ENCODE measurements at regions of chr7 and their contacts with region 1.

Region 1: DNA sequence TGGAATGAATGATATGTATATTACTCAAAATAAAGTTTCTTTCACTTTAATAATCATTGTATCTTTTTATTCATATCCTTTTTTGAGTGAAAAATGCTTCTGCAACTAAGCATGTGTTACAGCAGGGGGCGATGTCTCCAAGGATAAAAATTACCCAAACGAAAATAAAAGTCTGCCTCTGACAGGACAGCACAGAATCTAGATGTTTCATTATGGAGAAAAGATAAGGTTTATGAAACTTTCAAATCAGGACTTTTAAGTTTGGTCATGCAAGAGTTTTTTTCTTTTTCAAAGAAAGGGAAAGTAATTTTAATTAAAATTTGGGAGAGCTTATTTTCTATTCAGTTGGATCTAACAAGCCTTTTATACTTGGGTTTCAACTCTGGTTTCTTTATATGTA is 48.4 kb downstream of the TES start:
- DNase-seq: peak; percentile 52 to 80 (median 73)
- H3K4me3 ChIP-seq: no peak overlapping the region
- H3K27ac ChIP-seq: no peak overlapping the region
- H3K4me1 ChIP-seq: no peaks in the 10 kb centered on the region
- H3K27me3 ChIP-seq: no peaks in the 10 kb centered on the region

Region 2: DNA sequence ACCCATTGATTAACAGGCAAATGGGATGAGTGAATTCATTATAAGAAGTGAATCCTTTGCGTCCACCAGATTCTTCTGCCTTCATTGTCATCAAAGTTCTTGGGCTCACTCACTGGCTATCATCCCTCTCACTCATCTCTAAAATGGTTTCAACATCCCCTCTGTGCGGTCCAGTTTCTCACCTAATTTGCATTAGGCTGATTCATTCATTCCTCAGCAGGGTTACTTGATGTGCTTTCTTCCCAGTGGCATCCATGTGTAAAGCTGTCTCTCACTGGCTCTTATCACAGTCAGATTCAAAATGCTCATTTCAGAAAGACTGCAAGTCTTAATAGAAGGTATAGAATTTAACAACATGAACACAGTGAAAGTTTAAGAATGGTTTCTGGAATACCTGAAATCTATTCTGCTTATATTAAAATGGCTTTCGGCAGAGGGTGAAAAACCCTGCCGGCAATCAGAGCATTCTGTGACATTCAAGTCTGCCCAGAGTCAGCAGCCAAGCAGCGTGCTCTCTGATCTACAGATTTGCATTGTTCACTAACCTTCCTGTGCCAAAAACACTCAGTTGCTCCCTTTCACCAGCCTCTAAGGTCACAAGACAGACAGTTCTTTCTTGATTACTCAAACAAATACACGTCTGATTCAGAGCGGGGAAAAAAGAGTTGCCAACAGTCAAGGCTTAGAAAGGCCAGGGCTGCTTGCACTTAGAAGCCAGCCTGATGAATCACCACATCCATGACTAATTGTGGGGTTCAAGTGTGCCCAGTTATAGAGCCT is 58.3 kb after region 1 on chr7:
- CTCF ChIA-PET with region 1: no interaction called
- POLR2A ChIA-PET with region 1: no interaction called
- DNase-seq: no peak
- H3K4me3 ChIP-seq: no peak overlapping the region
- H3K27ac ChIP-seq: no peak overlapping the region
- H3K4me1 ChIP-seq: no peaks in the 10 kb centered on the region
- H3K27me3 ChIP-seq: no peaks in the 10 kb centered on the region

Region 3: GRCh38 chr7:116525913-116526861 is 267.5 kb after region 1 on chr7:
- CTCF ChIA-PET with region 1: interaction called, 30 read pairs
- POLR2A ChIA-PET with region 1: no interaction called
- DNase-seq: peak; percentile 70 to 82 (median 76)
- H3K4me3 ChIP-seq: peak overlapping the region; percentile 17 to 83 (median 54)
- H3K27ac ChIP-seq: no peak overlapping the region
- H3K4me1 ChIP-seq: peaks cover 0 to 28% (median 22%) of the 10 kb centered on the region in 4 experiments
- H3K27me3 ChIP-seq: peaks cover 10 to 57% (median 37%) of the 10 kb centered on the region in 5 experiments

Region 4: DNA sequence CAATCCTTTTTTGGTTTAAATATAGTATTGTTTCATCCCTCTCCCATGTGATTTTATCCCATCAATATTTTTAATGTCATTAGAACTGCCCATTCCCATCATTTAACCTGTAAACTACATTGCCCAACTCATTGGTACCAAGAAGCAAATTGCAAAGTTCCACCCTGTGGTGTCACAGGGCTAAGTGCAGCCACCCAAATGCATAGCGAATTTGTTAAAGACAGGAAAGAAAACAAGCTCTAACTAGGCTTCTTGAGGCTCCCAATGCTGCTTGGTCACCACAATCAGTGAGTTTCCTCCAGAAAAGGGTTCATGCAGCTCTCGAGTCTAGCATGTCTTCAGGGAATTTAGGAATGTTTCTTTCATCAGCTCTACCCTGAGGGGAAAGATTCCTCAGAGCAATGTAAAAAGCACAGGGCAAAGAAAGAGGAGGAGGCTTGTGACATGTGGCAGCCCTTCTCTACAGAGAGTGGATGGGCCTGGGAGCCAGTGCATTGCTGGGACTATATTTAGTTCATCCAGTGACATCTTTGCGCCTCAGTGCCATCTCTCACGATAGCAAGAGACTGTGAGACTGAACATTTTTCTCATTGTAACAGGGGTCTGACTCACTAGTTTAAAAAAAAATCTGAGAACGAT is 324.2 kb after region 1 on chr7:
- CTCF ChIA-PET with region 1: interaction called, 55 read pairs
- POLR2A ChIA-PET with region 1: no interaction called
- DNase-seq: no peak
- H3K4me3 ChIP-seq: no peak overlapping the region
- H3K27ac ChIP-seq: no peak overlapping the region
- H3K4me1 ChIP-seq: peaks cover 3 to 4% (median 3%) of the 10 kb centered on the region in 4 experiments
- H3K27me3 ChIP-seq: no peaks in the 10 kb centered on the region

Measured in common myeloid progenitor, CD34-positive (primary cell).